AG04450 (cell line): ENCODE measurements at regions of chr6 and their contacts with region 1.

Region 1: GRCh38 chr6:149716181-149716973 is 1.5 kb downstream of the LATS1 start:
- DNase-seq: no peak
- H3K4me3 ChIP-seq: peak overlapping the region; percentile 90
- H3K27ac ChIP-seq: no peak overlapping the region
- H3K27me3 ChIP-seq: no peaks in the 10 kb centered on the region
- CTCF ChIP-seq: no peak

Region 2: GRCh38 chr6:149217466-149217888 is 498.9 kb before region 1 on chr6:
- CTCF ChIA-PET with region 1: no interaction called
- POLR2A ChIA-PET with region 1: no interaction called
- DNase-seq: no peak
- H3K4me3 ChIP-seq: no peak overlapping the region
- H3K27ac ChIP-seq: no peak overlapping the region
- H3K27me3 ChIP-seq: no peaks in the 10 kb centered on the region
- CTCF ChIP-seq: no peak

Region 3: GRCh38 chr6:149529650-149530049 is 186.7 kb before region 1 on chr6:
- CTCF ChIA-PET with region 1: no interaction called
- POLR2A ChIA-PET with region 1: no interaction called
- DNase-seq: no peak
- H3K4me3 ChIP-seq: no peak overlapping the region
- H3K27ac ChIP-seq: no peak overlapping the region
- H3K27me3 ChIP-seq: no peaks in the 10 kb centered on the region
- CTCF ChIP-seq: no peak

Region 4: DNA sequence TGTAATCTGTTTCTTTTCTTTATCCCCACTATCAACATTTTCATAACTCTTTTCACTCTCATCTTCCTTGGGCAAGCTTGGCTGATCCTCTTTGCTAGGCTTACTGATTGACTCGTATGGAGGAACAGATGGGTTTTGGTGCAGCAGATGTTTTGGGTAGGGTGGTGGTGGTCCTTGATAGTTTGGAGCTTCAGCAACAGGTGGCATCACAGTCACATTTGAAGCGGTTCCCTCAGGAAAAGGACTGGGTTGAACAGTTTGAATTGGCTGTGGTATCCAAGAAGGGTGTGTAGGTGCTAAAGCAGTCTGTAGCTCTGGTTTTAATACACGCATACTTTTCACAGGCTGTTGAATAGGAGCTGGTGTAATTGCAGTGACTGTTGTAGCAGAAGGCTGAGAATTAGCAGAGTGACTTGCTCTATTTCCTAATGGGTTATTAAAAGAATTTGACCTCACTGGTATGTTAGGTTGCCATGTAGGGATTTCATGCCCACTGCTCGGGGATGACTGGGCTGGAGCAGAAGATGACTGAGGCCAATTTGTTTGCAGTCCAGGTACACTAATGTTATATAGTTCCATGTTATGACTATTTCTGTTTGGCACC is 33.0 kb before region 1 on chr6:
- CTCF ChIA-PET with region 1: no interaction called
- POLR2A ChIA-PET with region 1: interaction called, 14 read pairs
- DNase-seq: no peak
- H3K4me3 ChIP-seq: no peak overlapping the region
- H3K27ac ChIP-seq: no peak overlapping the region
- H3K27me3 ChIP-seq: no peaks in the 10 kb centered on the region
- CTCF ChIP-seq: no peak

Region 5: GRCh38 chr6:149806127-149806526 is 89.8 kb after region 1 on chr6:
- CTCF ChIA-PET with region 1: no interaction called
- POLR2A ChIA-PET with region 1: no interaction called
- DNase-seq: no peak
- H3K4me3 ChIP-seq: no peak overlapping the region
- H3K27ac ChIP-seq: no peak overlapping the region
- H3K27me3 ChIP-seq: no peaks in the 10 kb centered on the region
- CTCF ChIP-seq: no peak